ENCODE measurements at regions of chr2 and their contacts with region 1.

Region 1: DNA sequence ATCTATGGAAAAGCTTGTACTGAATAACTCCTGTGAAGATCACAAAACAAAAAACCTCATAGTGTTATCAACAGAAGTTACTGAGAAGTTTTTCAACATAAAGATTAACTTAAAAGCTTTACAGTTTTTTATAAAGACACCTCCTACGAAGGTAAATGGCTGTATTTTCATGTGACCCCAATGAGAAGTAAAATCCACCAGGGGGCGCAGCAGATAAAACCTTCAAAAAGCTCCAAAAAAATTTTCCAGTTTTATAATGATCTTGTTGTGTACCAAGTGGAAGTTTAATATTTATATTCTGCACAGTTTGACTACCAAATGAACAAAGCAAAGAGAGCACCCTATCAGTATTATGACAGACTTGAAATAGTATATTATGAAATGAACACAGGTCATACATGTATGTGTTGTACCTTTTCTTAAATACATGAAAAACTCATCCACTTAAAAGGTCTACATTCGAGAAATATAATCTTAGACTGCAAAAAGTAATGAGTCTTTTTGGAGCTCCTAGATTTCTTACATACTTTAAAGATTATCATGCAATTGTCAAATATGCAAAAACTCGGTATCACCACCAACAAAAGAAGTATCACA is 38.5 kb downstream of the PNO1 start:
- DNase-seq: peak in 1 of 3 donors; percentile 73
- ATAC-seq: peak; percentile 42
- H3K4me3 ChIP-seq: no peak overlapping the region
- H3K4me1 ChIP-seq: peaks cover 3% of the 10 kb centered on the region
- CTCF ChIP-seq: no peak

Region 2: GRCh38 chr2:68244456-68244855 is 48.2 kb after region 1 on chr2:
- intact Hi-C with region 1: loop called in 1 of 2 experiments (anchors 10 kb)
- DNase-seq: no peak
- ATAC-seq: no peak
- H3K4me3 ChIP-seq: no peak overlapping the region
- H3K4me1 ChIP-seq: peaks cover 32% of the 10 kb centered on the region
- CTCF ChIP-seq: no peak